Transverse colon (tissue), 4 donors: ENCODE measurements at regions of chr1 and their contacts with region 1.

Region 1: GRCh38 chr1:78688701-78689100 is 39.1 kb downstream of the IFI44 start:
- DNase-seq: no peak
- H3K4me3 ChIP-seq: no peak overlapping the region
- H3K27ac ChIP-seq: no peak overlapping the region
- H3K4me1 ChIP-seq: no peaks in the 10 kb centered on the region
- H3K27me3 ChIP-seq: no peaks in the 10 kb centered on the region
- CTCF ChIP-seq: no peak
- EP300 ChIP-seq: no peak
- POLR2A ChIP-seq: no peak

Region 2: DNA sequence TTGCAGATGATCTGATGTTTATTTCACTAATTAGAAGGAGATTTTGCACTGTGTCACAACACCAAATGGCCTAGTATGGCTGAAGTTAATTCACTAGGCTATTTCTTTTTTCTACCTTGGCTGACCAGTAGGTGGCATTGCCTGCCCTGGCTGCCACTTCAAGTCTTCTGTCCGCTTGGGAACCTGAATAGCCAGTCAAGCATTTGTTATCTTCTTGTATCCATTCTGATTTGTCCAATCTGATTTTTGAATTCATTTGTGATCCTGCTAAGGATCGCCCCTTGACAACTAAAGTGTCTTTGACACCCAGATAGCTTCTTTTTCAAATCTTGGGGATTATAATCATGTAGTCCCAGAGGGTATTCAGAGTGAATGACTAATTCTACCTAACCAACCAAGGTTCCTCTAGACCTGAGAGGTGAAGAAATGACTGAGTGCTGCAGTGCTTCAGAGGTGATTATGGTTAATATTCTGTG is 543.6 kb before region 1 on chr1:
- in situ Hi-C with region 1: loop called in 1 of 4 experiments (anchors 10 kb)
- intact Hi-C with region 1: loop called (anchors 10 kb)
- DNase-seq: peak; percentile 56
- H3K4me3 ChIP-seq: no peak overlapping the region
- H3K27ac ChIP-seq: no peak overlapping the region
- H3K4me1 ChIP-seq: peaks cover 0 to 20% (median 7%) of the 10 kb centered on the region in 4 donors
- H3K27me3 ChIP-seq: no peaks in the 10 kb centered on the region
- CTCF ChIP-seq: peak; percentile 79 to 92 (median 86)
- EP300 ChIP-seq: no peak
- POLR2A ChIP-seq: no peak

Region 3: DNA sequence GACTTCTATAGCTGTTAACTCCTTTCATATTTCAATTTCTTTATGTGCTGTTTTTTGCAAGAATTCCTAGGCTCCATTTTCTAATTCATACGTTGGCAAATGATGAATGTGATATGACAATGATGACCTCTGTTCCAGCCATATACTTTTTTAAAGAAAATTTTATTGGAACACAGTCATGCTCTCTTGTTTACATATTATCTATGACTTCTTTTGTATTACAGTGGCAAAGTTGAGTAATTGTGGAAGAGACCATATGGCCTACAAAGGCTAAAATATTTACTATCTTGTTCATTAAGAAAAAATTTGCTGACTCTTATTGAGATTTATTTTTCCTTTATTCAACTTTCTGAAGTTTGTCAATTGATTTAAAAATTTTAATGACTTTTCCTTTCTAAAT is 61.4 kb before region 1 on chr1:
- in situ Hi-C with region 1: no loop called
- intact Hi-C with region 1: no loop called
- DNase-seq: no peak
- H3K4me3 ChIP-seq: no peak overlapping the region
- H3K27ac ChIP-seq: no peak overlapping the region
- H3K4me1 ChIP-seq: peaks cover 0 to 3% (median 0%) of the 10 kb centered on the region in 4 donors
- H3K27me3 ChIP-seq: no peaks in the 10 kb centered on the region
- CTCF ChIP-seq: no peak
- EP300 ChIP-seq: no peak
- POLR2A ChIP-seq: no peak